SK-N-SH (cell line): ENCODE measurements at regions of chr2 and their contacts with region 1.

Region 1: GRCh38 chr2:99337113-99338028 is at the start of gene EIF5B:
- DNase-seq: peak; percentile 94
- H3K4me3 ChIP-seq: peak within 1 kb of the TSS; percentile 81 to 96
- H3K27ac ChIP-seq: peak within 1 kb of the TSS; percentile 82 to 91
- H3K4me1 ChIP-seq: peaks cover 0 to 6% of the 10 kb centered on the region in 2 experiments; a peak in 2 of 4 replicates
- H3K27me3 ChIP-seq: no peaks in the 10 kb centered on the region
- CTCF ChIP-seq: peak; percentile 76
- EP300 ChIP-seq: no peak
- RAD21 ChIP-seq: no peak; the same call in 1 of the 2 replicates
- polyA plus RNA-seq, gene EIF5B: 8.7 and 9.8 TPM in 2 replicates

Region 2: DNA sequence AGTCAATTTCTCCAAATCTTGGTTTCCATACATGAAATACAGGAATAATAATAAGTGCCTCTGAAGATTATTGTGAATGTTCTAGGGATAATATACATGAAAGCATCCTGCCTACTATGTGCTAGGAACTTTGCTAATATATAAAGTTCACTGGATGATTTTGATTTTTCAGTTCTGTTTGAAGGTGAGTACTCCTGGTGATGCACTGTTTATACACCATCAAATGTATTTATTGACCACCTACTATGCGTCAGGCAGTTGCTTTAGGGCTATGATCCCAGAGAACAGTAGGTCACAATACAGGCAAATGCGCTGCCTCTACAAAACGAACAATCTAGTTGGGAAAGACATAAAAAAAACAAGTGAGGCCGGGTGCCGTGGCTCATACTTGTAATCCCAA is 12.0 kb before region 1 on chr2:
- CTCF ChIA-PET with region 1: interaction called, 11 read pairs
- POLR2A ChIA-PET with region 1: no interaction called
- DNase-seq: no peak
- H3K4me3 ChIP-seq: no peak overlapping the region
- H3K27ac ChIP-seq: peak overlapping the region in 1 of 2 experiments; percentile 54; a peak in 1 of 4 replicates
- H3K4me1 ChIP-seq: no peaks in the 10 kb centered on the region
- H3K27me3 ChIP-seq: no peaks in the 10 kb centered on the region
- CTCF ChIP-seq: no peak
- EP300 ChIP-seq: no peak
- RAD21 ChIP-seq: no peak

Region 3: DNA sequence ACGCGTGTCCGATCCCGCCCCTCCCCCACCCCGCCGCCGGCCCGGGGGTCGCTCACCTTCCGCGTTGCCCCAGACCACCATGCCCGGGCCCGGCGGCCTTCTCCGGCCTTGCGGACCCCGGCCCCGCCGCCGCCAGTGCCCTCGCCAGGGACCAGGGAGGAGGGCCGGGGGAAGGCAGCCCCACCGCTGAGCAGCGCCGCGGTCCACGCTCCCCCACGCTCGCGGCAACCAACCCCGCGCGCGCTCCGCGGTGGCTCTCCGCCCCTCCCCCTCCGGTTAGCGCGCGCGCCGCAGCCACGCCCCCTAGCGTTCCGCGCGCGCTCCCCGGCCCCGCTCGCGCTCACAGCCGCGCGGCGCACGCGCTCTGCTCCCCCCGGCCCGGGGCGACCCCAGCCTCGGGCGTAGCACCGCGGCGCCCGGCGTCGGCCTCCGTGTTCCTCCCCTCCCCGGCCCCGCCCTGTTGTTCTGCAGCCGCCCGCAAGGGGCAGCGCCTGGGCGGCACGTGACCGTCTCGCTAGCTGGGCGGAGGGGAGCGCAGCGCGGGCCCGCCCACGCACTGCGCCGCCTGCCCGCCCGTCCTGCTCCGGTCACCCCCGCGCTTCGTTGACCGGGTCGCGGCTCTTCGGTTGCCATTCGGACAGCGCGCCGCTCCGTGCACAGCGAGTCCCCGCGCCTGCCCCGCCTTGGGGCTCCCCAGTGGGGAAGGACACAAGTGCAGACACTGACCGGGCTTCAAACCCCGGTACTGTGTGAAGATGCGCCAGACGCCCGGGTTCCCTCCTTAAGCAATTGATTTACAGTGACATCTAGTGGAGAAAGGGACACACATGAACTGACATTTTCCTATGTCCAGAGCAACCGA is 152.6 kb after region 1 on chr2 and contains the start of gene REV1:
- CTCF ChIA-PET with region 1: interaction called, 24 read pairs
- POLR2A ChIA-PET with region 1: interaction called, 8 read pairs
- DNase-seq: peak; percentile 99
- H3K4me3 ChIP-seq: peak within 1 kb of the TSS; percentile 78 to 96
- H3K27ac ChIP-seq: peak within 1 kb of the TSS; percentile 79 to 93
- H3K4me1 ChIP-seq: peaks cover 0 to 14% of the 10 kb centered on the region in 2 experiments; a peak in 2 of 4 replicates
- H3K27me3 ChIP-seq: no peaks in the 10 kb centered on the region; the same call in 1 of the 2 replicates
- CTCF ChIP-seq: peak; percentile 77
- EP300 ChIP-seq: no peak
- RAD21 ChIP-seq: peak; percentile 80
- polyA plus RNA-seq, gene REV1: 15.9 and 24.2 TPM in 2 replicates